ENCODE measurements at regions of chr1 and their contacts with region 1.

Region 1: GRCh38 chr1:178308438-178308837 is 188.3 kb downstream of the CLEC20A start:
- DNase-seq: no peak
- H3K4me3 ChIP-seq: no peak overlapping the region
- H3K27ac ChIP-seq: no peak overlapping the region
- H3K27me3 ChIP-seq: no peaks in the 10 kb centered on the region
- CTCF ChIP-seq: no peak

Region 2: GRCh38 chr1:178241837-178242236 is 66.6 kb before region 1 on chr1:
- intact Hi-C with region 1: no loop called
- DNase-seq: no peak
- H3K4me3 ChIP-seq: no peak overlapping the region
- H3K27ac ChIP-seq: no peak overlapping the region
- H3K27me3 ChIP-seq: no peaks in the 10 kb centered on the region
- CTCF ChIP-seq: peak in 15 of 56 donors; percentile 8 to 35 (median 18)

Region 3: GRCh38 chr1:178498896-178499675 is 190.6 kb after region 1 on chr1:
- intact Hi-C with region 1: loop called in 1 of 2 experiments (anchors 10 kb)
- DNase-seq: no peak
- H3K4me3 ChIP-seq: no peak overlapping the region
- H3K27ac ChIP-seq: no peak overlapping the region
- H3K27me3 ChIP-seq: no peaks in the 10 kb centered on the region
- CTCF ChIP-seq: no peak

Region 4: DNA sequence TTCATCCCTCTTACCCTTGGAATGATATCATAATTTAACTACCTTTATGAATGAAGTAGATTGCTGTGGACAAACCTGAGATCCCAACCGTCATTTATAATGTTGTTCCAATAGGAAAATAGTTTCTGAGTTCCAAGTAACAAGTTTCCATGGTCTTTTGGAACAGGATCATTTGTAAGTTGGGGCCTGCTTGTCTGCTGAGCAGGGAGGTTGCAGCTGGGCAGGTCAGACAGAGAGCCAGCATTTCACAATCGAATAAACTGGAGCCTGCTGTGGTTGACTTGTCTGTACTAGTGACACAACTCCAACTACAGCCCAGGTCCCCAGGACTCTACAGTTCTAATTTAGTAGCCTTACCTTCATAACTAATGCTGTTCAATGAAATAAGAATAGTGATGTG is 398.0 kb after region 1 on chr1:
- intact Hi-C with region 1: no loop called
- DNase-seq: no peak
- H3K4me3 ChIP-seq: no peak overlapping the region
- H3K27ac ChIP-seq: no peak overlapping the region
- H3K27me3 ChIP-seq: peaks cover 0 to 3% (median 0%) of the 10 kb centered on the region in 45 donors
- CTCF ChIP-seq: no peak

Region 5: GRCh38 chr1:178749581-178750166 is 441.2 kb after region 1 on chr1:
- intact Hi-C with region 1: loop called in 1 of 2 experiments (anchors 10 kb)
- DNase-seq: no peak
- H3K4me3 ChIP-seq: no peak overlapping the region
- H3K27ac ChIP-seq: no peak overlapping the region
- H3K27me3 ChIP-seq: no peaks in the 10 kb centered on the region
- CTCF ChIP-seq: no peak

Measured in dorsolateral prefrontal cortex (tissue), 120 donors.